ENCODE measurements at regions of chr14 and their contacts with region 1.

Region 1: DNA sequence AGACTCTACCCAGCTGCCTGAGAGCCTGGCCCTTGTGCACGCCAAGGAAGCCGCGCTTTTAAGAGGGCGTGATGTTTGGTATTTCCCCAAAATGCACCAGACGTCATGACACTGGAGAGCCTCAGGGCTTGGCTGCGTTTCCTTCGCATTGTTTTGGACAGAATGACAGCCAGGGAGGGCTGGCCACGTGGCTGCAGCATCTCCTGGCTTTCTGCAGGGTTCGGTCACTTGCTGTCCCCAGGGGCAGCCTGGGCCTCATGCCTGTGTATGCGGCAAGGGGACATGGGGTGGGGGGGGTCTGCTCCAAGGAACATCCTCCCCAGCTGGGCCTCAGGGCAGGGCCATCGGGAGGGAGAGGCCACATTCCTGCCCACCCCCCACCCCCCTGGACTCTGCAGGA is 16.2 kb upstream of the NUDT14 start:
- DNase-seq: peak in 1 of 9 experiments; percentile 61
- ATAC-seq: peak; percentile 25
- H3K4me3 ChIP-seq: no peak overlapping the region
- H3K4me3 Mint-ChIP-seq: no peak overlapping the region
- H3K27ac ChIP-seq: no peak overlapping the region
- H3K27ac Mint-ChIP-seq: no peak overlapping the region
- H3K4me1 ChIP-seq: peaks cover 61% of the 10 kb centered on the region
- H3K4me1 Mint-ChIP-seq: peaks cover 33% of the 10 kb centered on the region
- H3K27me3 ChIP-seq: peaks cover 10 to 24% of the 10 kb centered on the region in 2 experiments
- H3K27me3 Mint-ChIP-seq: peaks cover 39% of the 10 kb centered on the region
- CTCF ChIP-seq: no peak

Region 2: GRCh38 chr14:105537369-105538164 is 340.3 kb after region 1 on chr14:
- CTCF ChIA-PET with region 1: no interaction called
- POLR2A ChIA-PET with region 1: no interaction called
- intact Hi-C with region 1: loop called in 1 of 2 experiments (anchors 10 kb)
- DNase-seq: peak; percentile 60 to 83 (median 71)
- ATAC-seq: peak; percentile 81
- H3K4me3 ChIP-seq: no peak overlapping the region
- H3K4me3 Mint-ChIP-seq: no peak overlapping the region
- H3K27ac ChIP-seq: no peak overlapping the region
- H3K27ac Mint-ChIP-seq: no peak overlapping the region
- H3K4me1 ChIP-seq: peaks cover 7% of the 10 kb centered on the region
- H3K4me1 Mint-ChIP-seq: peaks cover 2% of the 10 kb centered on the region
- H3K27me3 ChIP-seq: peaks cover 3 to 4% of the 10 kb centered on the region in 2 experiments
- H3K27me3 Mint-ChIP-seq: peaks cover 12% of the 10 kb centered on the region
- CTCF ChIP-seq: peak; percentile 96